Naive thymus-derived CD8-positive, alpha-beta T cell (primary cell): ENCODE measurements at regions of chr19 and their contacts with region 1.

Region 1: DNA sequence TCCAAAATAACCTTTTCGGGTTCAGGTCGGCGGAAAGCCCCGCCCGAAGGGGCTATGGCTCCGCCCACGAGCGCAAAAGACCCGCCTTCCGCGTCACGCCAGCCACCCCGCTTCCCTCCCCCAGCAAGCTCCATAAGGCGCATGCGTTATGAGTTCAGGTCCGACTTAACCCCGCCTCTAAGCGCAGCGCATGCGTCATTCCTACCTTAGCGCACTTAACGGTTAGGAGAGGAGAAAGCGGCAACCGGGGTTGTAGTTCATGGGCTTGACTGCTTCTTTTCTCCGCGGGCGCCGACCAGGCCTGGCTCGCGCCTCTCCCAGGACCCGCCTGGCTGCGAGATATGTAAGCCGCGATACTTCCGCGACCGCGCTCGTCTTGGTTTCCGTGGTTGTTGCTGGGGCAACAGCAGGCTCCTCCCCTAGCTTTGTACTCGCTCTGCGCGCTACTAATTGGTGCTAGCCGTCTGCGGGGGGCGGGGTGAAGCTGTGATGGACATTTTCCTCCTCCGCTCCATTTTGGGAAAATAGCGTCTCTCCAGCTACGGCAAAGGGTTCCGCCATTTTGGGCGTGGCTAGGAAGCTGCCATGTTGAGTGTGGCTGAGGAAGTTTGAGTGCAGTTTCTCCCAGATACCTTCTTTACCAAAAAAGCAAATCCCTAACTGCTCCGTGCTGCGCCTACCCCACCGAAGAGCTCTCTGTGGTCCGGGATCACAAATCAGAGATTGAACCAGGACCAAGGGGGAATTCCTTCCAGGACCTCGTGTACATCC is at the start of gene B9D2:
- DNase-seq: peak; percentile 91 to 100 (median 98)
- ATAC-seq: peak; percentile 93 to 94
- H3K4me3 Mint-ChIP-seq: peak within 1 kb of the TSS; percentile 89 to 97 (median 94)
- H3K27ac Mint-ChIP-seq: peak within 1 kb of the TSS; percentile 99 to 100 (median 100)
- H3K4me1 Mint-ChIP-seq: peaks cover 12 to 57% (median 40%) of the 10 kb centered on the region in 4 donors
- H3K27me3 Mint-ChIP-seq: no peaks in the 10 kb centered on the region
- polyA plus RNA-seq, gene B9D2: 12.6 to 20.9 (median 19.8) TPM

Region 2: GRCh38 chr19:41397086-41398049 is 33.4 kb after region 1 on chr19 and contains the starts of genes BCKDHA and EXOSC5:
- POLR2A ChIA-PET with region 1: interaction called, 17 read pairs
- DNase-seq: peak; percentile 97 to 100 (median 99)
- ATAC-seq: peak; percentile 98
- H3K4me3 Mint-ChIP-seq: peak within 1 kb of the TSS; percentile 98 to 99 (median 98)
- H3K27ac Mint-ChIP-seq: peak within 1 kb of the TSS; percentile 99 to 100 (median 100)
- H3K4me1 Mint-ChIP-seq: peaks cover 27 to 56% (median 51%) of the 10 kb centered on the region in 4 donors
- H3K27me3 Mint-ChIP-seq: peaks cover 0 to 2% (median 0%) of the 10 kb centered on the region in 5 donors
- polyA plus RNA-seq, gene BCKDHA: 51.8 to 67.3 (median 53.8) TPM
- polyA plus RNA-seq, gene EXOSC5: 69.0 to 88.0 (median 84.8) TPM

Region 3: GRCh38 chr19:41420101-41420880 is 56.4 kb after region 1 on chr19:
- POLR2A ChIA-PET with region 1: no interaction called
- DNase-seq: no peak
- ATAC-seq: no peak
- H3K4me3 Mint-ChIP-seq: no peak overlapping the region
- H3K27ac Mint-ChIP-seq: peak overlapping the region in 1 of 10 donors; percentile 3
- H3K4me1 Mint-ChIP-seq: peaks cover 5 to 10% (median 7%) of the 10 kb centered on the region in 4 donors
- H3K27me3 Mint-ChIP-seq: no peaks in the 10 kb centered on the region